ENCODE measurements at regions of chr10 and their contacts with region 1.

Region 1: GRCh38 chr10:100743626-100744135 is 1.7 kb upstream of the PAX2 start:
- DNase-seq: no peak
- ATAC-seq: peak; percentile 49
- H3K4me3 ChIP-seq: peak overlapping the region; percentile 58 to 67
- H3K27ac ChIP-seq: peak overlapping the region; percentile 99
- H3K4me1 ChIP-seq: peaks cover 44% of the 10 kb centered on the region
- H3K27me3 ChIP-seq: no peaks in the 10 kb centered on the region
- CTCF ChIP-seq: peak; percentile 97

Region 2: GRCh38 chr10:100518761-100519241 is 224.9 kb before region 1 on chr10:
- CTCF ChIA-PET with region 1: interaction called, 21 read pairs
- POLR2A ChIA-PET with region 1: no interaction called
- in situ Hi-C with region 1: no loop called
- intact Hi-C with region 1: no loop called
- DNase-seq: peak; percentile 48
- ATAC-seq: peak; percentile 81
- H3K4me3 ChIP-seq: no peak overlapping the region
- H3K27ac ChIP-seq: no peak overlapping the region
- H3K4me1 ChIP-seq: no peaks in the 10 kb centered on the region
- H3K27me3 ChIP-seq: no peaks in the 10 kb centered on the region
- CTCF ChIP-seq: peak; percentile 90

Region 3: GRCh38 chr10:100562008-100562711 is 181.5 kb before region 1 on chr10:
- CTCF ChIA-PET with region 1: interaction called, 20 read pairs
- POLR2A ChIA-PET with region 1: no interaction called
- in situ Hi-C with region 1: no loop called
- intact Hi-C with region 1: loop called (anchors 2 kb)
- DNase-seq: peak; percentile 30
- ATAC-seq: peak; percentile 87
- H3K4me3 ChIP-seq: no peak overlapping the region
- H3K27ac ChIP-seq: no peak overlapping the region
- H3K4me1 ChIP-seq: peaks cover 5% of the 10 kb centered on the region
- H3K27me3 ChIP-seq: no peaks in the 10 kb centered on the region
- CTCF ChIP-seq: peak; percentile 100

Region 4: GRCh38 chr10:100707261-100707848 is 36.3 kb before region 1 on chr10:
- CTCF ChIA-PET with region 1: interaction called, 10 read pairs
- POLR2A ChIA-PET with region 1: interaction called, 3 read pairs
- in situ Hi-C with region 1: no loop called
- intact Hi-C with region 1: no loop called
- DNase-seq: no peak
- ATAC-seq: no peak
- H3K4me3 ChIP-seq: no peak overlapping the region
- H3K27ac ChIP-seq: no peak overlapping the region
- H3K4me1 ChIP-seq: peaks cover 9% of the 10 kb centered on the region
- H3K27me3 ChIP-seq: no peaks in the 10 kb centered on the region
- CTCF ChIP-seq: no peak

Region 5: GRCh38 chr10:100873146-100873794 is 129.6 kb after region 1 on chr10:
- CTCF ChIA-PET with region 1: interaction called, 18 read pairs
- POLR2A ChIA-PET with region 1: no interaction called
- in situ Hi-C with region 1: no loop called
- intact Hi-C with region 1: loop called (anchors 5 kb)
- DNase-seq: no peak
- ATAC-seq: no peak
- H3K4me3 ChIP-seq: no peak overlapping the region
- H3K27ac ChIP-seq: no peak overlapping the region
- H3K4me1 ChIP-seq: no peaks in the 10 kb centered on the region
- H3K27me3 ChIP-seq: no peaks in the 10 kb centered on the region
- CTCF ChIP-seq: no peak

Region 6: GRCh38 chr10:100930368-100930767 is 186.7 kb after region 1 on chr10:
- CTCF ChIA-PET with region 1: no interaction called
- POLR2A ChIA-PET with region 1: interaction called, 11 read pairs
- in situ Hi-C with region 1: no loop called
- intact Hi-C with region 1: no loop called
- DNase-seq: no peak
- ATAC-seq: no peak; the same call in 1 of the 2 replicates
- H3K4me3 ChIP-seq: no peak overlapping the region
- H3K27ac ChIP-seq: no peak overlapping the region
- H3K4me1 ChIP-seq: no peaks in the 10 kb centered on the region
- H3K27me3 ChIP-seq: no peaks in the 10 kb centered on the region
- CTCF ChIP-seq: peak; percentile 24; the same call in 1 of the 2 replicates